ENCODE measurements at regions of chr1 and their contacts with region 1.

Region 1: DNA sequence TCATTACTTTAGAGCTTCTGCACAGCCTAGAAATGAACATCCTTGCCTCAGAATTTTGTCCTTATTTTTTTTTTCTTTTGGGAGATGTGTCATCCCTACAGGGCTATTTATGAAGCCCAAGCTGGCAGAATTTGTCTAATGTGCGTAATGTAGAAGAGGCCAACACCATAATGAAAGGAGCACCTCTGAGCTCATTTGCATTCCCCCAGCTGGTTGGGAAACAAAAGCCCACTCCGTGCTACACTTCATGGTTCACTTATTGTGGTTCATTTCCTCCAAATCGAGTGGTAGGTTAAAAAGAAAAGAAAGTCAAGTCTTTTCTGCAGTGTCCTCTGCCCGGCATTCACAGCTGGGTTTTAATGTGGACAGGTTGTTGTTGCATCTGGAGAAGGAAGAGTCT is 73.5 kb downstream of the KAZN start:
- DNase-seq: no peak
- H3K4me3 ChIP-seq: no peak overlapping the region
- H3K27ac ChIP-seq: no peak overlapping the region
- H3K4me1 ChIP-seq: no peaks in the 10 kb centered on the region
- H3K27me3 ChIP-seq: no peaks in the 10 kb centered on the region
- CTCF ChIP-seq: no peak

Region 2: GRCh38 chr1:14626869-14627607 is 45.0 kb before region 1 on chr1:
- CTCF ChIA-PET with region 1: no interaction called
- dilution Hi-C with region 1: loop called (anchors 5 kb)
- in situ Hi-C with region 1: no loop called
- intact Hi-C with region 1: no loop called
- DNase-seq: peak; percentile 52
- H3K4me3 ChIP-seq: no peak overlapping the region
- H3K27ac ChIP-seq: no peak overlapping the region
- H3K4me1 ChIP-seq: peaks cover 17% of the 10 kb centered on the region
- H3K27me3 ChIP-seq: no peaks in the 10 kb centered on the region
- CTCF ChIP-seq: no peak

Region 3: DNA sequence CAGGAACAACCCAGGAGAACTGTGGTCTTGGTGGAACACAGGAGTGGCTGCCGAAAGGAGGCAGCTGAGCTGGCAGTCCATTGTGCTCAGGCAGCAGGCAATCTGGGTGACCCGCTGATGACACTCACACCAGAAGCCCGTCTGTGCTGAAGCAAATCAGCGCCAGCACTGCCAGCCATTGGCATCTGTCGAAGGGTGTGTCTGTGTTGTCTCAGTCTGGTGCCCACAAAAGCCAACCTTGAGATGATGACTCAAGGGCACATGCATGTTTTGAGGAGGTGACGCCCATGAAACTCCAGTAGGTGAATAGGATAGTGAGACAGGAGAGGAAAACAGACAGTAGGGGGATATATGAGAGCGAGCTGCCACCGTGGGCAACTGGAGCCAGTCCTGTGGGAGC is 93.8 kb after region 1 on chr1:
- CTCF ChIA-PET with region 1: no interaction called
- dilution Hi-C with region 1: no loop called
- in situ Hi-C with region 1: no loop called
- intact Hi-C with region 1: no loop called
- DNase-seq: peak; percentile 95
- H3K4me3 ChIP-seq: no peak overlapping the region
- H3K27ac ChIP-seq: no peak overlapping the region
- H3K4me1 ChIP-seq: peaks cover 5% of the 10 kb centered on the region
- H3K27me3 ChIP-seq: no peaks in the 10 kb centered on the region
- CTCF ChIP-seq: no peak